Activated B cell treated with CpG ODN at 0.5 μM for 24 hours (primary cell): ENCODE measurements at regions of chr6 and their contacts with region 1.

Region 1: DNA sequence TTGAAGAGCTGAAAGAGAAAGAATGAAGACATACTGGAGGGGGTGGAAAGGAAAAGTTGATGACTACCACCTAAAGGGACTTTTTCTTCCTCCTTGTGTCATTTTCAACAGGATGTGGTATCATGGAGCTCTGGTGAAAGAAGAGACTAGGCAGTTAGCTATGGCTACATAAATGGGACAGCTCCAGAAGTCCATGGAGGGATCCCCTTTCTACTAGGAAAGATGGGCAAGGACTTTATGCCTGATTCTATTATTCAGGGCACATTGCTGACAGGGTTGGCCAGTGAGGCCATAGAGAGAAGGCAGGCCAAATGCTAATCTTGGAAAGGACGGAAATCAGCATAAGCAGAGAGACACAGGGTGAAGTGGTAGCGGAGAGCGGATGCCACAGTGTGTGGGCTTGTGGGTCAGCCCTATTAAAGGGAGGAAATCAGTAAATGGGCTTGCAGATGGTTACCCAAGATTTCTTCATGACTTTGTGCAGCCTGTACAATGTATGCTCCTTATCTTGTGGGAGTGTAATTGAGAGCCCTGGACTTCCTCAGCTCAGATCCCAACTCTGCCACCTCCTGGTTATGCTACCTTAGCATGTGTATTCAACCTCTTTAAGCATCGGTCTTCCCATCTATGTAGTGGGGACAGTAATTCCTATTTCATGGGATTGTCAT is 77.4 kb upstream of the TMEM170B start:
- DNase-seq: peak; percentile 22
- ATAC-seq: peak; percentile 18
- H3K4me3 Mint-ChIP-seq: peak overlapping the region; percentile 80
- H3K27ac Mint-ChIP-seq: peak overlapping the region; percentile 96
- H3K4me1 Mint-ChIP-seq: peaks cover 78% of the 10 kb centered on the region
- H3K27me3 Mint-ChIP-seq: no peaks in the 10 kb centered on the region
- CTCF ChIP-seq: no peak

Region 2: GRCh38 chr6:11277275-11278206 is 182.6 kb before region 1 on chr6:
- CTCF ChIA-PET with region 1: no interaction called
- POLR2A ChIA-PET with region 1: interaction called, 18 read pairs
- intact Hi-C with region 1: loop called (anchors 2 kb)
- DNase-seq: no peak
- ATAC-seq: peak; percentile 69
- H3K4me3 Mint-ChIP-seq: peak overlapping the region; percentile 59
- H3K27ac Mint-ChIP-seq: peak overlapping the region; percentile 91
- H3K4me1 Mint-ChIP-seq: peaks cover 48% of the 10 kb centered on the region
- H3K27me3 Mint-ChIP-seq: no peaks in the 10 kb centered on the region
- CTCF ChIP-seq: no peak

Region 3: GRCh38 chr6:11317885-11318771 is 142.0 kb before region 1 on chr6:
- CTCF ChIA-PET with region 1: no interaction called
- POLR2A ChIA-PET with region 1: interaction called, 5 read pairs
- intact Hi-C with region 1: loop called (anchors 1 kb)
- DNase-seq: no peak
- ATAC-seq: peak; percentile 89
- H3K4me3 Mint-ChIP-seq: peak overlapping the region; percentile 12
- H3K27ac Mint-ChIP-seq: peak overlapping the region; percentile 76
- H3K4me1 Mint-ChIP-seq: peaks cover 24% of the 10 kb centered on the region
- H3K27me3 Mint-ChIP-seq: no peaks in the 10 kb centered on the region
- CTCF ChIP-seq: no peak

Region 4: DNA sequence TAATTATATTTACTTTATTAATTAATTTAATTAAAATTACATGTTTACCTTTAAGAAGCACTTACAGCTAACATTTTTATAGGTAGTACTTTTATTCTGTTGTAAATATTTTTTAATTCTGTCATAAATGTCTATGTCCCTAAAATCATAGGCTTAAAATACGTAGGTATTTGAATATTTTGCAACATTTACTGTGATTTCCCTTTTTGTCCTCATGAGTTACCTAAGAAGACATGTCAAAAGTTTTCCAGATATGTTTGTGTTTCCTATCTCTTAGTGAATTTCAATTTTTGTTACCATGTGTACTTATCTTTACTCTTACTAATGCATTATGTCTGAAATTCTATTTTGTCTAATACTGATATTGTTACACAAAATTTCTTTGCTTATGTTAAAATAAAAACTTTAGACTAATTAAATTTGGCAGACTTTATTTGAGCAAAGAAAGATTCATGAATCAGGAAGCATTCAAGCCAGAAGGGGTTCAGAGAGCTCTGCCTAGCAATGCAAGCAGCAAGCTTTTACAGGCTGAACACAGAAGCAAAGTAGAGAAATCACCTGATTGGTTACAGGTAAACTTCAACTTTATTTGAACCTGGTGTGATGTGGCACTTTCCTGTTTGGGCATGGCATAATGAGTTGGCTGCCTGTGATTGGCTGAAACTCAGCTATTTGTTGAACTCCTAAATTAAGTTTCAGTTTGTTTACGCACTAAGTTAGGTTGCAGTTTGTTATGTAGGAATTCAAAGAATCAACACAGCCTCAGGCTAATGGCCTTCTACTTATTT is 45.8 kb before region 1 on chr6:
- CTCF ChIA-PET with region 1: no interaction called
- POLR2A ChIA-PET with region 1: interaction called, 3 read pairs
- intact Hi-C with region 1: loop called (anchors 5 kb)
- DNase-seq: no peak
- ATAC-seq: peak; percentile 62
- H3K4me3 Mint-ChIP-seq: no peak overlapping the region
- H3K27ac Mint-ChIP-seq: no peak overlapping the region
- H3K4me1 Mint-ChIP-seq: peaks cover 45% of the 10 kb centered on the region
- H3K27me3 Mint-ChIP-seq: no peaks in the 10 kb centered on the region
- CTCF ChIP-seq: no peak

Region 5: GRCh38 chr6:11445146-11445545 is 15.0 kb before region 1 on chr6:
- CTCF ChIA-PET with region 1: no interaction called
- POLR2A ChIA-PET with region 1: interaction called, 9 read pairs
- intact Hi-C with region 1: loop called (anchors 1 kb)
- DNase-seq: no peak
- ATAC-seq: no peak
- H3K4me3 Mint-ChIP-seq: peak overlapping the region; percentile 26
- H3K27ac Mint-ChIP-seq: peak overlapping the region; percentile 54
- H3K4me1 Mint-ChIP-seq: peaks cover 67% of the 10 kb centered on the region
- H3K27me3 Mint-ChIP-seq: no peaks in the 10 kb centered on the region
- CTCF ChIP-seq: no peak